ENCODE measurements at regions of chr6 and their contacts with region 1.

Region 1: GRCh38 chr6:153312641-153313040 is 181.6 kb upstream of the RGS17 start:
- DNase-seq: peak; percentile 64 to 81 (median 77)
- H3K4me3 ChIP-seq: no peak overlapping the region
- H3K27ac ChIP-seq: no peak overlapping the region
- H3K4me1 ChIP-seq: no peaks in the 10 kb centered on the region
- H3K27me3 ChIP-seq: peaks cover 0 to 3% (median 0%) of the 10 kb centered on the region in 5 experiments

Region 2: DNA sequence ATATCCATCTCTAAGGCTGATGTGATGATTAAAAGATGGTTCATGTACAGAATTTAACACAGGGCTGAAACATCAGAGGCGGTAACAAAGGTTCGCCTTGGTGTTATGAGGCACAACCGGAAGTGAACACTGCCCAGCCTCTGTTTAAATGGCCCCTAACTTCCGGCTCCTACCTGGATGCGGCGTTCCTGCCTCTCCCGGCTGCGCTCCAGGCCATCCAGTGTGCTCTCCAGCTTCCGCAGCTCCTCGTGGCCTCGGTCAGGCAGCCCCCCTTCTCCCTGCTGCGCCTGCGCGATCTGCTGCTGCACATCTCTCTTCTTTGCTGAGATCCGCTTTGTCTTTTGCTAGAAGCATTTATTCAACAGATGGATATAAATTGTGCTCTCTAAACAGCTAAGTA is 870.7 kb before region 1 on chr6:
- CTCF ChIA-PET with region 1: no interaction called
- POLR2A ChIA-PET with region 1: no interaction called
- DNase-seq: no peak
- H3K4me3 ChIP-seq: no peak overlapping the region
- H3K27ac ChIP-seq: no peak overlapping the region
- H3K4me1 ChIP-seq: no peaks in the 10 kb centered on the region
- H3K27me3 ChIP-seq: no peaks in the 10 kb centered on the region

Region 3: GRCh38 chr6:153032255-153032882 is 280.3 kb before region 1 on chr6:
- CTCF ChIA-PET with region 1: interaction called, 21 read pairs
- POLR2A ChIA-PET with region 1: interaction called, 3 read pairs
- DNase-seq: peak; percentile 49 to 72 (median 69)
- H3K4me3 ChIP-seq: no peak overlapping the region
- H3K27ac ChIP-seq: no peak overlapping the region
- H3K4me1 ChIP-seq: peaks cover 0 to 2% (median 0%) of the 10 kb centered on the region in 4 experiments
- H3K27me3 ChIP-seq: no peaks in the 10 kb centered on the region

Region 4: DNA sequence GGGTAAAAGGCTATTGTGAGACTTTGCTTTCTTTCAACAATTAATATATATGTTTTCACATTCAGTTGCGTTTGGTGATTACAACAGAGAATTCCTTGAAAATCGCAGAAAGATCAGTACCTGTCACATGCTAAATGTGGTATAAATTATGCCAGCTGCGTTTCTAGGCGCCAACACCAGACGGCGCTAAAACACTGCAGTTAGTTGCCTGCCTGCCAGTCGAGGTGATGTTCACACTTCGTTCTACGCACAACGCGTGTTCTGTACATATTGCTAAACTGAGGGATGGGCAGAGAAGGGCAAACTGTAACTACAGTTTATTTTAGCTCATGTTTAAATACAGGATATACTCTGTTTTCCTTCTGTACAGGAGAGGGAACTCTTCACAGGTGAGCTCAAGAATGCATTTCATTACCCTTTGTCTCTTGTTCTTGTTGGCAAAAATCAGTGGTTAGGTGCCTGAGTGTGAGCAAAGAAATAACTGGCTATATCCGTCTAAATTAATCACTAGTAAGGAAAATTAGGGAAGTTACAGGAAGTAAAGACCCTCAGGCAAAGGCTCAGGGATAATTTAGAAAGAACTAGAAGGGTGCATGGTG is 81.5 kb before region 1 on chr6:
- CTCF ChIA-PET with region 1: interaction called, 10 read pairs
- POLR2A ChIA-PET with region 1: no interaction called
- DNase-seq: peak; percentile 25 to 50 (median 49)
- H3K4me3 ChIP-seq: no peak overlapping the region
- H3K27ac ChIP-seq: no peak overlapping the region
- H3K4me1 ChIP-seq: no peaks in the 10 kb centered on the region
- H3K27me3 ChIP-seq: peaks cover 0 to 2% (median 0%) of the 10 kb centered on the region in 5 experiments

Measured in common myeloid progenitor, CD34-positive (primary cell).